ENCODE measurements at regions of chr2 and their contacts with region 1.

Region 1: DNA sequence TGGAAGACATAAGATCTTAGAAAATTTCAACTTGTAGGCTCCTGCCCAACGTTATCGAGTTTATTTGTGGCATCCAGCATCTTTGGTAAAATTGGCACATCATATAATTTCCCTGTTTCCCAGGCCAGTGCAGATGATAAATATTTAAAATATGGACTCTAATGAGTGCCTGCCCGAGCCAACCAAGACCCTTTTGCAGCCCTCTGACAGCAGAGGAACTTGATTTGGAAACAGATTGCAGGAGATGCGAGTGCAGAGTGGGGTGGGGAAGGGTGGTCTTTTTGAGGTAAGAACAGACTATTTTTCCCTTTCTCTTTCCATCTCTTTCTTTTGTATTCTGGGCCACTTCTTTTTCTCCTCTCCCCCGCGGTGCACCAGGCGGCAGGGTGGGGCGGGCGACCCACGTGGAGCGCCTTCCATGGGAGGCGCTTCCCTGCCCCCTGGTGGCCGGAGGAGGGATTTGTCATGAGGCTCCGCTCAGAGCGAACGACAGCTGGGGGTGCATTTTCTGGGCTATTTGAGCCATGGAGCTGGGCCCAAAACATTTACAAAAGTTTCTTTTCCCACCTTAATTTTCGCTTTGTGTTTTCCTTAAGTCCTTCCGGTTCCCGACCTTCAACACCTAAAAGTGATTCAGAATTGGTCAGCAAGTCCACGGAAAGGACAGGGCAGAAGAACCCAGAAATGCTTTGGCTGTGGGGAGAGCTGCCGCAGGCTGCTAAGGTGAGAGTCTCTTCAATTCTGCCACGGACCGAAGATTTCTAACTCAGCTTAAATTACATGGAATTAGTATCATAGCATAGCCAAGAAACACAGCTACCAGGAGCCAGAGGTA is 32.7 kb downstream of the LPIN1 start:
- DNase-seq: peak; percentile 70 to 93 (median 88)
- ATAC-seq: peak; percentile 96
- H3K4me3 ChIP-seq: peak overlapping the region in 1 of 2 experiments; percentile 24
- H3K4me3 Mint-ChIP-seq: peak overlapping the region; percentile 23
- H3K27ac ChIP-seq: peak overlapping the region in 1 of 2 experiments; percentile 40
- H3K27ac Mint-ChIP-seq: peak overlapping the region; percentile 6
- H3K4me1 ChIP-seq: peaks cover 21% of the 10 kb centered on the region
- H3K4me1 Mint-ChIP-seq: peaks cover 37% of the 10 kb centered on the region
- H3K27me3 ChIP-seq: no peaks in the 10 kb centered on the region
- H3K27me3 Mint-ChIP-seq: no peaks in the 10 kb centered on the region
- CTCF ChIP-seq: peak; percentile 93

Region 2: DNA sequence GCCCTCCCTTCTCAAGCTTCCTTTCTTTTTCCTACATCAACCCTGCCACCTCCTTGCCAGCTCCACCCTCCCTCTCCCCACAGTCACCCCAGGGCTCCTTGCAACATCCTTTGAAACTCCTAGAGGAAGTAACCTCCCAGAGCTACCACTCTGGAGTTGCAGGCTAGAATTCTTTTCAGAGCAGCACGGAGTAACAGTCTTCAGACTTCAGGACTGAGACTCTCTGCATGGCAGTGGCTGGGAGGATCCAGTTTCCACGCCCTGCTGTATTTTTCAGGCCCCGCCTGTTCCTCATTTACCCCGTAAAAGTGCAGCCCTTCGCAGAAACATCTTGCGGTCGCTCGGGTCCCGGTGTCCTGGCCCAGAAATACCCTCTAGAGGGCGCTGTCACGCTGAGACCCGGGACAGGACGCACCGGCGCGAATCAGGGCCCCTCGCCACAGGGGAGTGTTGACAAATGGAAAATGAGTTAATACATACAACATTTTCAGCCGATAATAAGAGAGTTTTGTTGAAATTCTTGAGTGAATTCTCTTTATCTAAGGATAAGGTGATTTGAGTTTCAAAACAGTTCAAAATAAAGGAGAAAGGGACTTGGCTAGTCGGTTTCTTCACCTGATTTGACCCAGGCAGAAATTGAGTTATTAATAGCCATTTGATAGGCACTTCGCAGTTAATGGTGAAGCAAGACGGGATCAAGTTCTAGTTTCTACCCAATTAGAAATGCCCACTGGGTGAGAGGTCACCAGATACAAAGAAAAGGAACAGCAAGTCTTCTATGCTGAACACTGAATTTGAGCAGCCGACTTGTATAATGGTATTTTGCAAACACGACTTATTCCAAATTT is 90.7 kb before region 1 on chr2:
- CTCF ChIA-PET with region 1: interaction called, 438 read pairs
- POLR2A ChIA-PET with region 1: interaction called, 3 read pairs
- intact Hi-C with region 1: loop called (anchors 1 kb)
- DNase-seq: peak; percentile 62 to 86 (median 81)
- ATAC-seq: peak; percentile 85
- H3K4me3 ChIP-seq: no peak overlapping the region
- H3K4me3 Mint-ChIP-seq: peak overlapping the region; percentile 58
- H3K27ac ChIP-seq: no peak overlapping the region
- H3K27ac Mint-ChIP-seq: no peak overlapping the region
- H3K4me1 ChIP-seq: peaks cover 4% of the 10 kb centered on the region
- H3K4me1 Mint-ChIP-seq: peaks cover 11% of the 10 kb centered on the region
- H3K27me3 ChIP-seq: peaks cover 0 to 4% of the 10 kb centered on the region in 2 experiments
- H3K27me3 Mint-ChIP-seq: peaks cover 8% of the 10 kb centered on the region
- CTCF ChIP-seq: peak; percentile 96

Region 3: DNA sequence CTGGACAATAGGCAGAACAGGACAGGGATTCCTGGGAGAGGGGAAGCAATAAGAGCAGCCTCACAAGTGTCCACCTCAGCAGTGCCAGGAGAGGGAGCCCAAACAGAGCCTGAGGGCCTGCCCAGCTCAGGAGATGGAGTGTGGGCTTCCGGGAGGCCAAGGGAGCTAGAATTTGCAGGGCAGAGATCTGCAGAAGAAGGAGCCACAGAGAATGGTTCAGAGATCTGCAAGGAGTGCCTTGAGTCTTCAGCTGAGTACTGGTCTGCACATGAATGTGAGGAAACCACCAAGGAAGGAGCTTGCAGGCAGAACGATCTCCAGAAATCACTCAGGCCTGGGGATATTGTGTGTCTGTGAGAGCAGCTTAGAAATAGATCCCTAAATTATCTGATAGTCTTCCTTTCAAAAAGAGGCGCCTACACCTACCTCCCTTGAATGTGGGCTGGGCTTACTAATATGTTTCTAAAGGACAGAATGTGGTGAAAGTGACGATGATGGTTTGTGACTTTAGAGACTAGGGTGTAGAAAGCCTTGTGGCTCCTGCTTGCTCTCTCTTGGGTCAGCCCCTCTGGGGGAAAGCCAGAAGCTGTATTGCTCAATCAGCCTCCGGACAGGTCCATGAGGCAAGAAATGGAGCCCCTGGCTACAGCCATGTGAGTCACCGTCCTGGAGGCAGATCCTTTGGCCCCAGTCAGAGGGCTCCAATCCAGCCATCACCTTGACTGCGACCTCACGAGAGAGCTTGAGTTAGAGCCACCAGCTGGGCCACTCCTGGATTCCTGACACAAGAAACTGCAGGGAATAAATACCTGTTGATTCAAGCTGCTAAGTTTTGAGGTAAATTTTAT is 40.3 kb before region 1 on chr2:
- CTCF ChIA-PET with region 1: interaction called, 27 read pairs
- POLR2A ChIA-PET with region 1: no interaction called
- intact Hi-C with region 1: loop called (anchors 1 kb)
- DNase-seq: peak in 4 of 9 experiments; percentile 26 to 70 (median 48)
- ATAC-seq: peak; percentile 56
- H3K4me3 ChIP-seq: no peak overlapping the region
- H3K4me3 Mint-ChIP-seq: no peak overlapping the region
- H3K27ac ChIP-seq: no peak overlapping the region
- H3K27ac Mint-ChIP-seq: no peak overlapping the region
- H3K4me1 ChIP-seq: peaks cover 4% of the 10 kb centered on the region
- H3K4me1 Mint-ChIP-seq: peaks cover 3% of the 10 kb centered on the region
- H3K27me3 ChIP-seq: no peaks in the 10 kb centered on the region
- H3K27me3 Mint-ChIP-seq: peaks cover 9% of the 10 kb centered on the region
- CTCF ChIP-seq: no peak

Region 4: GRCh38 chr2:11753886-11754699 is 25.0 kb before region 1 on chr2:
- CTCF ChIA-PET with region 1: interaction called, 45 read pairs
- POLR2A ChIA-PET with region 1: interaction called, 5 read pairs
- intact Hi-C with region 1: loop called in 1 of 2 experiments (anchors 1 kb)
- DNase-seq: peak in 8 of 9 experiments; percentile 41 to 78 (median 72)
- ATAC-seq: peak; percentile 43
- H3K4me3 ChIP-seq: peak overlapping the region; percentile 31 to 40
- H3K4me3 Mint-ChIP-seq: peak overlapping the region; percentile 84
- H3K27ac ChIP-seq: peak overlapping the region; percentile 36 to 91
- H3K27ac Mint-ChIP-seq: peak overlapping the region; percentile 96
- H3K4me1 ChIP-seq: peaks cover 67% of the 10 kb centered on the region
- H3K4me1 Mint-ChIP-seq: peaks cover 81% of the 10 kb centered on the region
- H3K27me3 ChIP-seq: no peaks in the 10 kb centered on the region
- H3K27me3 Mint-ChIP-seq: no peaks in the 10 kb centered on the region
- CTCF ChIP-seq: no peak

Region 5: DNA sequence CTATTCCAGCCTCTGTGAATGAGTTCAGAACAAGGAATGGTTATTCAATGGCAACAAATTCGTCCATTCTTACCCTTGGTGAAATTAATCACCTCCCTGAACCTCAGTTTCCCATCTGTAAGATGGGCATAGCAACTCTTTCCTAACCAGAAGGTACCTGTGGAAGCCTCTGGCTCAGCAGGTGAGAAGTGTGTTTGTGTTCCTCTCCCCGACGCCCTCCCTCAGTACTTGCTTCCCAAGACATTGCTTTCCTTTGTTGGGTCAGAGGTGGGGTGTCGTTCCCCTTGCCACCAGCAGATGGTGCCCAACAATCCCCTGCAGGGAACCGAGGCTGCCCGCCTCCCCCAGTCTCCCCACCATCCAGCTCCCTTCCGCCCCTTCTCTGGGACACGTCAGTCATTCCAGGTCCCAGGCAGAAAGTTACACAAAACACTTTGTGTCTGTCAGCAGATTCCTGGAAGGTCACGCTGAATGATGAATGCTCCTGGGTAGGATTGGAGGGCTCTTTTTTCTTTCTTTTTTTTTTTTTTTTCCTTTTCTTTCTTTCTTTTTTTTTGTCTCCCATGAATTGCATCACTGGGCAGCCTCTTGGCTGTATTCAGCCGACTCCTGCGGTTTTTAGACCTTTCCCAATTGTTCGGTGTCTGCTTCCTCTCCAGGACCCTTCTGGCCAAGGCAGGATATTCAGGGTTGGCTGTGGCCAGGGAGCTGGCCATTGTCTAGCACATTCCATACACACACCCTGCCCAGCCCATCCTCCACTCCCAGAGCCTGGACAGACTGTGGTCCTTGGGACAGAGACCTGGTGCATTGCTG is 84.6 kb after region 1 on chr2:
- CTCF ChIA-PET with region 1: no interaction called
- POLR2A ChIA-PET with region 1: no interaction called
- intact Hi-C with region 1: no loop called
- DNase-seq: peak; percentile 27 to 81 (median 68)
- ATAC-seq: peak; percentile 93
- H3K4me3 ChIP-seq: no peak overlapping the region
- H3K4me3 Mint-ChIP-seq: peak overlapping the region; percentile 27
- H3K27ac ChIP-seq: no peak overlapping the region
- H3K27ac Mint-ChIP-seq: no peak overlapping the region
- H3K4me1 ChIP-seq: peaks cover 3% of the 10 kb centered on the region
- H3K4me1 Mint-ChIP-seq: peaks cover 12% of the 10 kb centered on the region
- H3K27me3 ChIP-seq: no peaks in the 10 kb centered on the region
- H3K27me3 Mint-ChIP-seq: peaks cover 2% of the 10 kb centered on the region
- CTCF ChIP-seq: peak; percentile 97

Region 6: GRCh38 chr2:13714466-13714865 is 1935.3 kb after region 1 on chr2:
- CTCF ChIA-PET with region 1: no interaction called
- POLR2A ChIA-PET with region 1: no interaction called
- intact Hi-C with region 1: no loop called
- DNase-seq: no peak
- ATAC-seq: no peak
- H3K4me3 ChIP-seq: no peak overlapping the region
- H3K4me3 Mint-ChIP-seq: no peak overlapping the region
- H3K27ac ChIP-seq: no peak overlapping the region
- H3K27ac Mint-ChIP-seq: no peak overlapping the region
- H3K4me1 ChIP-seq: no peaks in the 10 kb centered on the region
- H3K4me1 Mint-ChIP-seq: no peaks in the 10 kb centered on the region
- H3K27me3 ChIP-seq: no peaks in the 10 kb centered on the region
- H3K27me3 Mint-ChIP-seq: no peaks in the 10 kb centered on the region
- CTCF ChIP-seq: no peak

Measured in CD8-positive, alpha-beta T cell (primary cell).